Vagina (tissue), 2 donors: ENCODE measurements at regions of chr1 and their contacts with region 1.

Region 1: GRCh38 chr1:248714248-248714647 is 11.7 kb upstream of the OR14I1 start:
- DNase-seq: no peak
- H3K4me3 ChIP-seq: no peak overlapping the region
- H3K27ac ChIP-seq: no peak overlapping the region
- H3K4me1 ChIP-seq: no peaks in the 10 kb centered on the region
- H3K27me3 ChIP-seq: no peaks in the 10 kb centered on the region
- CTCF ChIP-seq: no peak
- POLR2A ChIP-seq: no peak

Region 2: DNA sequence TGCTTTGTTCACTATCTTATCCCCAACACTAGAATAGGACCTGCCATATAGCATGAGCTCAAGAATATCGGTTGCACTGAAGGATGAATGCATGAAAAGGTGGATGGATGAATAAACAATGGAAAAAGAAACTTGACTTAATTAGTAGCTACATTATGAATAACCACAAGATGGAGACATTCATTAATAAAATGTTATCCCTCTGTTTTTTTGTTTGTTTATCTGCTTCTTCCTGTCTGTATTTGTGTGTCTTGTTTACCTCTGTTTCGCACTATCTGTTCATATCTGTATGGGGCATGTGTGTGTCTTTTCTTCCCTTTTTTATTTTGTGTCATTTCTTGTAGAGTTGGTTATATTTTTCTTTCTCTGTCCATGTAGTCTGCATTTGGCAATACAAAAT is 10.6 kb before region 1 on chr1:
- intact Hi-C with region 1: loop called (anchors 1 kb)
- DNase-seq: no peak
- H3K4me3 ChIP-seq: no peak overlapping the region
- H3K27ac ChIP-seq: no peak overlapping the region
- H3K4me1 ChIP-seq: no peaks in the 10 kb centered on the region
- H3K27me3 ChIP-seq: no peaks in the 10 kb centered on the region
- CTCF ChIP-seq: no peak
- POLR2A ChIP-seq: no peak